K562 (cell line): ENCODE measurements at regions of chr6 and their contacts with region 1.

Region 1: GRCh38 chr6:32796848-32797776 is 19.7 kb downstream of the HLA-DOB start:
- DNase-seq: peak; percentile 68 to 78 (median 76)
- ATAC-seq: peak; percentile 94
- H3K4me3 ChIP-seq: no peak overlapping the region
- H3K27ac ChIP-seq: no peak overlapping the region
- H3K4me1 ChIP-seq: no peaks in the 10 kb centered on the region
- H3K27me3 ChIP-seq: peaks cover 24% of the 10 kb centered on the region in 2 experiments
- CTCF ChIP-seq: peak; percentile 80 to 93 (median 88)
- EP300 ChIP-seq: no peak
- POLR2A ChIP-seq: no peak
- RAD21 ChIP-seq: peak; percentile 76 to 81

Region 2: GRCh38 chr6:32244946-32245398 is 552.1 kb before region 1 on chr6:
- CTCF ChIA-PET with region 1: interaction called, 12 read pairs
- POLR2A ChIA-PET with region 1: no interaction called
- in situ Hi-C with region 1: loop called (anchors 5 kb)
- intact Hi-C with region 1: loop called (anchors 5 kb)
- DNase-seq: peak; percentile 90 to 97 (median 96)
- ATAC-seq: peak; percentile 97
- H3K4me3 ChIP-seq: no peak overlapping the region
- H3K27ac ChIP-seq: no peak overlapping the region
- H3K4me1 ChIP-seq: no peaks in the 10 kb centered on the region
- H3K27me3 ChIP-seq: peaks cover 5 to 13% of the 10 kb centered on the region in 2 experiments; a peak in 4 of 5 replicates
- CTCF ChIP-seq: peak; percentile 91 to 95 (median 95)
- EP300 ChIP-seq: peak; percentile 37; the same call in 1 of the 2 replicates
- POLR2A ChIP-seq: no peak
- RAD21 ChIP-seq: peak; percentile 87 to 90

Region 3: DNA sequence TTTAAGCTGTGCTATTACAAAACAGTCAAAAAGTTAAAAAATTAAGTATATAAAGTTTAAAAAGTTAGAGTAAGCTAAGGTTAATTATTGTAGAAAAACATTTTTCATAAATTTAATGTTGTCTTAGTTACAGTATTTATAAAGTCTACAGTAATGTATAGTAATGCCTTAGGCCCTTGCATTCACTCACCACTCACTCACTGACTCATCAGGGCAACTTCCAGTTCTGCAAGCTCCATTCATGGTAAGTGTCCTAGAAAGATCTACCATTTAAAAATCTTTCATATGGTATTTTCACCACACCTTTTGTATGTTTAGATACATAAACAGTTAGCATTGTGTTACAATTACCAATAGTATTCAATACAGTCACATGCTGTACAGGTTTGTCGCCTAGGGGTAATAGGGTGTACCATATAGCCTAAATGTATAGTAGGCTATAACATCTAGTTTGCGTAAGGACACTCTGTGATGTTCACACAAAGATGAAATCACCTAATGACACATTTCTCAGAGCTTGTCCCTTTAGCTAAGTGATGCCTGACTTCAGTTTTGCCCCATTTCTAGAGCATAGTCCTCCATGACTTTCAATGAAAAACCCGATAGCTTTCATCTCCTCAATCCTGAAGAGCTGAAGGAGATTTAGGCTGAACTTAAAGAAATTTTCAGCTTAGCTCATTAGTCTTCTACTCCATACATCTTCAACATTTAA is 372.4 kb before region 1 on chr6:
- CTCF ChIA-PET with region 1: no interaction called
- POLR2A ChIA-PET with region 1: no interaction called
- in situ Hi-C with region 1: loop called (anchors 5 kb)
- intact Hi-C with region 1: no loop called
- DNase-seq: no peak
- ATAC-seq: no peak
- H3K4me3 ChIP-seq: no peak overlapping the region
- H3K27ac ChIP-seq: no peak overlapping the region
- H3K4me1 ChIP-seq: no peaks in the 10 kb centered on the region
- H3K27me3 ChIP-seq: no peaks in the 10 kb centered on the region
- CTCF ChIP-seq: no peak
- EP300 ChIP-seq: no peak
- POLR2A ChIP-seq: no peak
- RAD21 ChIP-seq: no peak

Region 4: GRCh38 chr6:32432050-32432450 is 365.1 kb before region 1 on chr6:
- CTCF ChIA-PET with region 1: interaction called, 10 read pairs
- POLR2A ChIA-PET with region 1: no interaction called
- in situ Hi-C with region 1: no loop called
- intact Hi-C with region 1: no loop called
- DNase-seq: peak in 2 of 4 experiments; percentile 22 to 29
- ATAC-seq: no peak
- H3K4me3 ChIP-seq: no peak overlapping the region
- H3K27ac ChIP-seq: no peak overlapping the region
- H3K4me1 ChIP-seq: no peaks in the 10 kb centered on the region
- H3K27me3 ChIP-seq: no peaks in the 10 kb centered on the region
- CTCF ChIP-seq: peak in 2 of 3 experiments; percentile 30 to 72; a peak in 3 of 6 replicates
- EP300 ChIP-seq: no peak
- POLR2A ChIP-seq: no peak
- RAD21 ChIP-seq: peak; percentile 81 to 82